Activated CD4-positive, alpha-beta memory T cell treated with anti-CD3 and anti-CD28 coated beads for 36 hours (primary cell): ENCODE measurements at regions of chr10 and their contacts with region 1.

Region 1: GRCh38 chr10:79445141-79445976 is at the start of gene ZCCHC24:
- DNase-seq: peak; percentile 95
- H3K4me3 Mint-ChIP-seq: peak within 1 kb of the TSS; percentile 70
- H3K27ac Mint-ChIP-seq: peak within 1 kb of the TSS; percentile 26
- H3K4me1 Mint-ChIP-seq: peaks cover 18% of the 10 kb centered on the region
- H3K27me3 Mint-ChIP-seq: peaks cover 6% of the 10 kb centered on the region
- total RNA-seq, gene ZCCHC24: 0.77 to 1.00 TPM

Region 2: DNA sequence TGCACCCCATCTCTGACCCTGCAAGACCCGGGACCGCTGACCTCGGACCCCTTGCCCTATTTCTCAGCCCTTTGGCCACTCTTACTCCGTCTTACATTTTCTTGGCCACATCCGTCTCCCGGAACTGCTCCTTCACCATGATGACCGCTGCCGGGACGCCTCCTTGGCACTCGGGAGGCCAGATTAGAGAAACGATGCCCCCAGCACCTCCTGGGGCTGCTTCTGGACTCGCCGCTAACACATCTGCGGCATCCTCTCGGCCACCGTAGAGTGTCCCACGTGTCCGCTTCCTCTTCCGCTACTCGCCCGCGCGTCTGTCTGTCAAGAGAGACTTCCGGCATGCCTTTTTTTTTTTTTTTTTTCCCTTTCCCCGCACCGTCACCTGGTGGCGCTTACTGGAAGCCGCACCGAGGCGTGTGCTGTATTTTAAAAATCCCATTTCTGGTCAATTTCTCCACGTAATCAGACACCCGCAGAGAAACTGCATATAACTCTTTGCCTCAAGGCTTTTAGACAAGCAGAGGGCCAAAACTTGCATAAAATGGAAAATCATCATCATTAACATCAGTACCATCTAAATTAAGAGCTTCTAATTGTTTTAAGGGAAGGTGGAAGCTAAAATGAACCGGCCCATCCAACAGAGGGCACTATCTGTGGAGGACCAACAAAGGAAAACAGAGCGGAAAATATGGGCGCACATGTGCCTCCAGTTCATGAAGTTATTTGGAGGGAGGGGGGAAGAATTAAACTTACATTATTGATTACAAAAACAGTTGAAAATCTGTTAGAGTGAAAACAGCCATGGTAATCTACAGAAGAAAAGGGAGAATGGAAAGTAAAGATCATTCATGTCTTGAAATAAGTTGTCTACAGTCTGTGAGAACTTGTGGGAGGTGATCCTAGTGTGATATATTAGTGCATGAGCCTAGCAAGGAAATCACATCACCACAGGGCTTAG is 1415.8 kb before region 1 on chr10 and contains the start of gene POLR3A:
- CTCF ChIA-PET with region 1: no interaction called
- POLR2A ChIA-PET with region 1: no interaction called
- intact Hi-C with region 1: loop called (anchors 10 kb)
- DNase-seq: peak; percentile 94
- H3K4me3 Mint-ChIP-seq: peak within 1 kb of the TSS; percentile 99
- H3K27ac Mint-ChIP-seq: peak within 1 kb of the TSS; percentile 93
- H3K4me1 Mint-ChIP-seq: peaks cover 33% of the 10 kb centered on the region
- H3K27me3 Mint-ChIP-seq: no peaks in the 10 kb centered on the region
- total RNA-seq, gene POLR3A: 16.6 to 17.0 TPM

Region 3: GRCh38 chr10:79242620-79243152 is 202.7 kb before region 1 on chr10:
- CTCF ChIA-PET with region 1: no interaction called
- POLR2A ChIA-PET with region 1: no interaction called
- intact Hi-C with region 1: loop called (anchors 1 kb)
- DNase-seq: peak; percentile 79
- H3K4me3 Mint-ChIP-seq: peak overlapping the region; percentile 76
- H3K27ac Mint-ChIP-seq: peak overlapping the region; percentile 91
- H3K4me1 Mint-ChIP-seq: peaks cover 55% of the 10 kb centered on the region
- H3K27me3 Mint-ChIP-seq: no peaks in the 10 kb centered on the region

Region 4: DNA sequence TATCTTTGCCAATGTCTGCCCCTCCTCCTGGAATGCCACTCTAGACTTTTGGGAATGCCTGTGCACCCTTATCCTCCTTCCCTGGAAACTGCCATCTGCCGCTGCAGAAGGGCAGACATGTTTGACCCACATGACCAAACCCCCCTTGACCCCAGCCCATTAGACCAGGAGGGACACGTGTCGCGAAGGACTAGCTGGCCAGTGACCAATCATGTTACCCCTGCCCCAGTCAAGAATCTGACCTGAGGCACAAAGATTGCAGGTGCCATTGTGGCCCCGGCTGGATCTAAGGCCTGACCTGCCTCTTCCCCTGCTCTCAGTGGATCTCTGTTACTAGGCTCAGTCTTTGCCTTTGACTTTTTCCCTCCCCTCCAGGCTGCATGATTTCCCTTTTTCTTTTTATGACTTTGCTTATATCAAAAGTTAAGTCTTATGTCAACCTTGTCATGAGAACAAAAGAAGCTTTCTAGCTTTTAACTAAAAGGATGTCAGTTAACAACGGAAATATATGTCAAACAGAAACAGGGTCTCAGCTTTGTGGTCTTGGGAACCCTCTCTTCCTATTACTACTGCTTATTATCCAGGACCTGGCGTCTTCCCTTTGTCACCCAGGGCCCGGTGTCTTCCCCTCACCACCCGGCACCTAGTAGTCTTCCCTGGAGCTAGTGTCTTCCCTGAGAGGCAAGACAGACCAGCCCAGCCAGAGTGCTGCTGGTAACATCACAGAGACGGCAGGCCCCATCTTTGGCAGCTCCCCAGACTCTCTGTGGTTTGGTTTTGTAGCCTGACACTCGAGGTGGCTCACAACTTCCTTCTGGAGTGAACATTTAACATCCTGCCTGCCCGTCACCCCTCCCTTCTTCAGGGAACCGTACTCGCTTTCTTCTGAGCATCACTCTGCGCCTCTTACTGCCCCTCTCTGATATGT is 122.5 kb before region 1 on chr10:
- CTCF ChIA-PET with region 1: no interaction called
- POLR2A ChIA-PET with region 1: no interaction called
- intact Hi-C with region 1: loop called (anchors 1 kb)
- DNase-seq: peak; percentile 91
- H3K4me3 Mint-ChIP-seq: peak overlapping the region; percentile 39
- H3K27ac Mint-ChIP-seq: peak overlapping the region; percentile 92
- H3K4me1 Mint-ChIP-seq: peaks cover 69% of the 10 kb centered on the region
- H3K27me3 Mint-ChIP-seq: no peaks in the 10 kb centered on the region

Region 5: GRCh38 chr10:79434821-79435251 is 10.5 kb before region 1 on chr10:
- CTCF ChIA-PET with region 1: interaction called, 3 read pairs
- POLR2A ChIA-PET with region 1: interaction called, 11 read pairs
- intact Hi-C with region 1: loop called (anchors 1 kb)
- DNase-seq: peak; percentile 33
- H3K4me3 Mint-ChIP-seq: peak overlapping the region; percentile 12
- H3K27ac Mint-ChIP-seq: peak overlapping the region; percentile 51
- H3K4me1 Mint-ChIP-seq: peaks cover 13% of the 10 kb centered on the region
- H3K27me3 Mint-ChIP-seq: no peaks in the 10 kb centered on the region

Region 6: DNA sequence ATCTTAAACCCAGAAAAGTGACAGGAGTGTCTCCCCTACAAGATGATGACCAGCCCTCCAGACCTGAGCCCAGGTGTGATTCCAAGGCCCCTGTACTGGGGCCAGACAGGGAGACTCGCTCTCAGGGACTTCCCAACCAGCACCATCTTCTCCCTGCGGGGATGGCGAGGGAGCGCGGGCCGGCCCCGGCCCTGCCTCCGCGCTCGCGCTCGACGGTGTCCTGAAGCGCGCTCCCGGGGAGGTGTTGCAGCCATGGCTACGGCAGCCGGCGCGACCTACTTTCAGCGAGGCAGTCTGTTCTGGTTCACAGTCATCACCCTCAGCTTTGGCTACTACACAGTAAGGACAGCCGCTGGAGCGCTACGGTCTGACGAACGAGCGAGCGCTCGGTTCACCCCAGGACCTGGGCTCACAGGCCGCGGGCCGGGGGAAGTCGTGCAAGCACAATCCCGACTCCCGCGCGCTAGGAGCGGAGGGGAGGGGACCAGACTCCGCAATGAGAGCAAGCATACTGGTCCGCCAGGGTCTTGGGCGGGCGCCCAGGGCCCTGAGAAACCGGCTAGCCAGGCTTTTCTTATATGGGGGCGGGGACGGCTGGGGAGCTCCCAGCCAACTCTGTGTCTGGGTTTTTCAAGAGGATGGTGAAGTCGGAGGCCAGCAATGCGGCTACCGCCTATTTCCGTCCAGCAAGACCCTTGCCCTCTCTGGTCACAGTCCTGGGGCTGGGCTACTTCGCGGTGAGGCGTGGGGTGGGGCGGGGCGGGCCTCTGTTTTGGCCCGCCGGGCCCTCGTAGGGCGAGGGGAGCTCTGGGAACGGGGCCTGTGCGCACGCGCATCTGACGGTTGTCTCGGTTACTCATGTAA is 633.3 kb after region 1 on chr10 and contains the start of gene TMEM254:
- CTCF ChIA-PET with region 1: no interaction called
- POLR2A ChIA-PET with region 1: no interaction called
- intact Hi-C with region 1: loop called (anchors 1 kb)
- DNase-seq: peak; percentile 94
- H3K4me3 Mint-ChIP-seq: peak within 1 kb of the TSS; percentile 97
- H3K27ac Mint-ChIP-seq: peak within 1 kb of the TSS; percentile 89
- H3K4me1 Mint-ChIP-seq: peaks cover 37% of the 10 kb centered on the region
- H3K27me3 Mint-ChIP-seq: no peaks in the 10 kb centered on the region
- total RNA-seq, gene TMEM254: 11.6 to 12.3 TPM

Region 7: DNA sequence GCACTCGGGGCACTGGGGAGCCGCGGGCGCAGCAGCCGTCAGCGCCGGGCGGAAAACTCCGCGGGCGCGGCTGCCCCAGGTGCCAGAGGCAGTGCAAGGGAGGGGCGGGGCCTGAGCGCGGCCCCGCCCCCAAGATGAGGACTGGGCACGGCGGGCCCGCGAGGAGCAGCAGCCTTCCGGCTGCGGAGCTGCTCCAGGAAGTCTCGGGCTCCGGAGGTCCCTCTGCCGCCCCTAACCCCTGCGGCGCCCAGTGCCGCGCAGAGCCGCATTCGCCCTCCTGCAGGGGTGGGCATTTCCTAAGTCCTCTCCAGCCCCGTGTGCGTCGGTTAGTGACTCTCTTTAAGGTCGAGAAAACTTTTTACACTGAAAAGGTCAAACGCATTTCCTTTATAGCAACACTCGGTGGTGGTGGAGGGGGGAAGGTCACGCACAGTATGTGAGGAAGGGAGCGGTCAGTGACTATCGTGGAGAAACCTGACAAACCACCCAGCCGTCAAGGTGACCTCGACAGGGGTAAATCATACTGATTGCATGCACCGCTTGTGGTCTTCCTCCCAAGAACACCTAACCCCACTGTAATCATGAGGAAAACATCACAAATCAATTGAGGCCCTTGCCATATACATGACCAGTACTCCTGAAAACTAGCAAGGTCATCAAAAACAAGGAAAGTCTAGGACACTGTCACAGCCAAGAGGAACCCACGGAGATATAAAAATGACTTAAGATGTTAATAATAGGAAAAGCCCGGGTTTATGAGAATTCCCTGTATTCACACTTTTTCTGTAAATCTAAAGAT is 760.3 kb after region 1 on chr10 and contains the start of gene ANXA11:
- CTCF ChIA-PET with region 1: no interaction called
- POLR2A ChIA-PET with region 1: no interaction called
- intact Hi-C with region 1: loop called (anchors 2 kb)
- DNase-seq: peak; percentile 89
- H3K4me3 Mint-ChIP-seq: peak within 1 kb of the TSS; percentile 91
- H3K27ac Mint-ChIP-seq: peak within 1 kb of the TSS; percentile 91
- H3K4me1 Mint-ChIP-seq: peaks cover 42% of the 10 kb centered on the region
- H3K27me3 Mint-ChIP-seq: no peaks in the 10 kb centered on the region
- total RNA-seq, gene ANXA11: 237 to 242 TPM